B cell (primary cell): ENCODE measurements at regions of chr6 and their contacts with region 1.

Region 1: DNA sequence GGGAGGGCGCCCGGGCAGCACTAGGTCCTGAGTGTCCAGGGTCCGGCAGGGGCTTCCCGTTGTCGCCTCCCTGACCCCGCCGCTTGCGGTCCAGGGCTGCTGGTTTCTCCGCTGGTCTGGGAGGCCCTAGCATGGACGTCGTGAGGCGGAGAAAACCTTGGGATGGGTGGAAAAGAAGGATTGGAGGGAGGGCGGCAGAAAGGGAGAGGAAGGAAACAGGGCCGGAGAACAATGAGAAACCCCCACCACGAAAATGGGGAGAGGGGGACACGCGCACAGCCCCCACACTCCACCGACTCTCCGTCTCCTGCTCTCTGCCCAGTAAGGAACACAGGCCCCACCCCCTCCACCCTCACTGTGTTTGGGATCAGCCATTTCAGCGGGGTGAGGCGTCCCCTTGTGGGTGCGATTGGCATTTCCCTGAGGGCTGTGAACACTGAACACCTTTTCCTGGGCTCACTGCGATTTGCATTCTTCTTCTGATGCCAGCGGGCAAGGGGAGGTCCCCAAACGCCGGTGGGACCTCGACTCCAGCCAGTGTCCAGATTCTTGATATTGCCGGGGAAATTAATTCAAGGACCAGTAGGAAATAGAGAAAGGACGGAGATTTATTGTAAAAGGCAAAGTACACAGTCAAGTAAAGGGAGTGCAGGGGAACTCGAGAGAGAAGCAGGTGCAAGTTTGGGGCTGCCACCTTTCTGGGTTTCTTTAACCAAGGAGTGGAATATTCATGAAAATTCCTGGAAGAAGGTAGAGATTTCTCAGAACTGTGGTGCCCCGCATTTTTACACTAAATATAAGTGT is 3.3 kb upstream of the RAET1G start:
- DNase-seq: peak; percentile 71
- ATAC-seq: peak; percentile 57
- H3K4me3 ChIP-seq: no peak overlapping the region
- H3K4me3 Mint-ChIP-seq: peak overlapping the region; percentile 23
- H3K27ac ChIP-seq: no peak overlapping the region
- H3K27ac Mint-ChIP-seq: no peak overlapping the region
- H3K4me1 ChIP-seq: peaks cover 29 to 37% of the 10 kb centered on the region in 2 donors
- H3K4me1 Mint-ChIP-seq: peaks cover 36% of the 10 kb centered on the region
- H3K27me3 ChIP-seq: peaks cover 0 to 71% (median 61%) of the 10 kb centered on the region in 4 experiments
- H3K27me3 Mint-ChIP-seq: peaks cover 86% of the 10 kb centered on the region
- CTCF ChIP-seq: peak; percentile 71

Region 2: DNA sequence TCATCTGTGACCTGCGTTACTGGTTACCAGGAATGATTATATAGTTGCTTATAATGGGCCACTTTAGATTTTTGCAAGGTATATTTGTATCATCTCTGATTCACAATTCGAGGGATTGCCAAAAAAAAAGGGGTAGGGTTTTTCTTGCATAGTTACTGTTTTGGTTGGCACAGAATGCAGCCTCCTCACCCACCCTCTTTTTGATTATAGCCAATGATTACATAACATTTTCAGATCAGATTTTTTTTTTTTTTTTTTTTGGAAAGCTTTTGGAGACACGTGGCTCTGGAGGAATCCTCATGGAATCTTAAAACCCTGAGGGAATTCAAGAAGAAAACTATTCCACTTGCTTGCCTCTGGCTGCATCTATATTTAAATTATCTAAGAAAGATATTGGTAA is 1125.6 kb before region 1 on chr6:
- CTCF ChIA-PET with region 1: no interaction called
- POLR2A ChIA-PET with region 1: no interaction called
- intact Hi-C with region 1: no loop called
- DNase-seq: no peak
- ATAC-seq: no peak
- H3K4me3 ChIP-seq: no peak overlapping the region
- H3K4me3 Mint-ChIP-seq: no peak overlapping the region
- H3K27ac ChIP-seq: no peak overlapping the region
- H3K27ac Mint-ChIP-seq: no peak overlapping the region
- H3K4me1 ChIP-seq: peaks cover 31 to 36% of the 10 kb centered on the region in 2 donors
- H3K4me1 Mint-ChIP-seq: peaks cover 61% of the 10 kb centered on the region
- H3K27me3 ChIP-seq: no peaks in the 10 kb centered on the region
- H3K27me3 Mint-ChIP-seq: no peaks in the 10 kb centered on the region
- CTCF ChIP-seq: no peak

Region 3: GRCh38 chr6:149723771-149724417 is 202.3 kb before region 1 on chr6:
- CTCF ChIA-PET with region 1: interaction called, 3 read pairs
- POLR2A ChIA-PET with region 1: no interaction called
- intact Hi-C with region 1: loop called (anchors 1 kb)
- DNase-seq: peak; percentile 53
- ATAC-seq: peak; percentile 75
- H3K4me3 ChIP-seq: no peak overlapping the region
- H3K4me3 Mint-ChIP-seq: no peak overlapping the region
- H3K27ac ChIP-seq: no peak overlapping the region
- H3K27ac Mint-ChIP-seq: no peak overlapping the region
- H3K4me1 ChIP-seq: peaks cover 8 to 10% of the 10 kb centered on the region in 2 donors
- H3K4me1 Mint-ChIP-seq: peaks cover 8% of the 10 kb centered on the region
- H3K27me3 ChIP-seq: no peaks in the 10 kb centered on the region
- H3K27me3 Mint-ChIP-seq: no peaks in the 10 kb centered on the region
- CTCF ChIP-seq: peak; percentile 73

Region 4: GRCh38 chr6:149834513-149835481 is 91.4 kb before region 1 on chr6:
- CTCF ChIA-PET with region 1: interaction called, 10 read pairs
- POLR2A ChIA-PET with region 1: no interaction called
- intact Hi-C with region 1: loop called (anchors 1 kb)
- DNase-seq: peak; percentile 78
- ATAC-seq: peak; percentile 70
- H3K4me3 ChIP-seq: no peak overlapping the region
- H3K4me3 Mint-ChIP-seq: no peak overlapping the region
- H3K27ac ChIP-seq: no peak overlapping the region
- H3K27ac Mint-ChIP-seq: no peak overlapping the region
- H3K4me1 ChIP-seq: no peaks in the 10 kb centered on the region
- H3K4me1 Mint-ChIP-seq: no peaks in the 10 kb centered on the region
- H3K27me3 ChIP-seq: peaks cover 0 to 8% (median 0%) of the 10 kb centered on the region in 4 experiments
- H3K27me3 Mint-ChIP-seq: peaks cover 21% of the 10 kb centered on the region
- CTCF ChIP-seq: peak; percentile 94

Region 5: DNA sequence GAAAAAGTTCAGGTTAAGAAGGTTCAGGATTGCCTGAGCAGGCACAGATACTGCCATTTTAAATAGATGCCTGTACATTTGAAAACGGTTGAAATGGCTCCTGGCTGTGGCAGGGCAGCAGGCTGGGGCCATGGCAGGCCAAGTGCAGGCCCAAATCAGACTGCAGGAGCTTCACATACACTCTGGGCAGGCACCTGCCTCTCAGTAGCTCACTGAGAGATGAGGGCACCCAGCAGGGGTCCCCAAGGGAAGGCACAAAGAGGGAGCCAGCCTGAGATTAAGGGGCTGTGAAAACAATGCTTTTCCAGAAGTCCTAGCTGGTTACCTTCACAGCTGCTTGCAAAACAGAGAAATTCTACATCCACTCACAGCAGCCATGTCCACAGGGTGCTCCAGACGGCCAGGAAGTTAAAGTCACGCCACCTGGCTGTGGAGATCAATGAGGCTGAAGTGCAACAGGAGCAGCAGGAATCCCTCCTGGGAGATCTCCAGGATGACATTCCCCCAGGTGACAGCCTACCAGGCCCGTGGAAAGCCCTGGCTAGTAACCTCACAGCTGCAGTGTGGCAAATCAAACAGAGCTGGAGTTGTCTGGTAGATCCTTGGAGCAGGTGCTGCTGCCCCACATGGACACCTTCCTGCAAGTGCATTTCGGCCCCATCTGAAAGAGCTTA is 22.1 kb before region 1 on chr6:
- CTCF ChIA-PET with region 1: no interaction called
- POLR2A ChIA-PET with region 1: no interaction called
- intact Hi-C with region 1: no loop called
- DNase-seq: no peak
- ATAC-seq: no peak
- H3K4me3 ChIP-seq: no peak overlapping the region
- H3K4me3 Mint-ChIP-seq: no peak overlapping the region
- H3K27ac ChIP-seq: no peak overlapping the region
- H3K27ac Mint-ChIP-seq: no peak overlapping the region
- H3K4me1 ChIP-seq: no peaks in the 10 kb centered on the region
- H3K4me1 Mint-ChIP-seq: no peaks in the 10 kb centered on the region
- H3K27me3 ChIP-seq: peaks cover 0 to 11% (median 0%) of the 10 kb centered on the region in 4 experiments
- H3K27me3 Mint-ChIP-seq: peaks cover 17% of the 10 kb centered on the region
- CTCF ChIP-seq: no peak